ENCODE measurements at regions of chr1 and their contacts with region 1.

Region 1: DNA sequence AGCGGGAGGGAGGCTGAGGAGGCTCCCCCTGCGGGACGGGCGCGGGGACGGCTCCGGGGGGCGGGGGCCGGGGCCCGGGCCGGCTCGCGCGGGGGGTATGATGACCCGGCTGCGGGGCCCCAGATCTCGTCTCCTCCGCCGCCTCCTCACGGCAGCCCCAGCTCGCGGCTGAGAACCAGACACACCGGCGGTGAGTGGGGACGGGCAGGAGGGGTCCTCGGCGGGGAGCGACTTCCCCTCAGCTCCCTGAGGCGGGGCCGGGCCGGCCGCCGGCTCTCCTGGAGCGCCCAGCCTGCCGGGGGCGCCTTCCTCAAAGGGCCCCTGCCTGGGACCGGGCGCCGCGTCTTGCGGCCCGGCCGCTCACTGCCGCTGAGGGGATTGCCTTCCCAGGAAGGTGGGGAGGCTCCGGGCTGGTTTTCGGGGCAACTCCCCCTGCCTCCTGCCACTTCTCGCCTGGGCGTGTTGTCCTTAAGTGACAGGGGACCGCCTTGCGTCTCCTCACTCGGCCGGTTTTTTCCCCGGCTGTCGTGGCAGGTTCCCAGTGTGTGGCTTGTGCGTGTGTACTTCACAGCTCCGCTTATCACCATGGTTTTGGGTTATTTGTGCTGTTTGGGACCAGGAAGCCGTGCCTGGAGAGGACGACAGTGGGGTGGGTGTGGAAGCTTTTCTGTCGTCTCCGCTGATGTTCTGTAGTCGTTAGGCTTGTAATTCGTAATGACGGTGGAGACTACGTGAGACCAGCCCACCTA is 800 bp downstream of the HIPK1 start:
- DNase-seq: peak; percentile 70
- CTCF ChIP-seq: peak; percentile 30

Region 2: DNA sequence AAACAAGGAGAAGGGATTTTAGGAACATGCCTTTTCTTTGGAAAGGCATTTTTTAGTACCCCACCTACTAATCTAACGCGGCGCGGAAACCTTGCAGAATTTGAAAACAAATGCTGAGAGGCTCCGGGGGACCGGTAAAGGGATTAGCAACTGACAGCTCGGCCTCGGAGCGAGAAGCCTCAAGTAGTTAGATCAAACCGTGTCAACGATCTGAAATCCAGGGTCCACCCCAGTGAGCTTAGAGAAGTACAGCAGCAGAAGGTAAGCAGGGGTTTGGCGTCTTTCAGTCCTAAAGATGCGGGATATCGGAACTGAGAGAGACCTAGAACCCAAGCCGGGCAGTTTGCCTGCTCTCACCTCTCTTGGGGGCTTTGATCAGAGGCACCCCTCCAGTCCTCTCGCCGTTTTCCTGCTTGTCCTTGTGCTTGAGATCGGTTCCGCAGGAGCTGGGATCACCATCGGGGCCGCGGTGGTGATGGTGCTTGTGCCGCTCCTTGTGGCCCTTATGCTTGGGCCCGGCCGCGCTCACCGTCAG is 118.5 kb before region 1 on chr1:
- in situ Hi-C with region 1: no loop called
- DNase-seq: peak; percentile 28
- CTCF ChIP-seq: no peak

Region 3: GRCh38 chr1:113821916-113822315 is 108.0 kb before region 1 on chr1:
- in situ Hi-C with region 1: loop called (anchors 10 kb)
- DNase-seq: no peak
- CTCF ChIP-seq: no peak

Region 4: GRCh38 chr1:114152508-114153260 is 222.8 kb after region 1 on chr1:
- in situ Hi-C with region 1: no loop called
- DNase-seq: peak; percentile 50
- CTCF ChIP-seq: no peak

Region 5: DNA sequence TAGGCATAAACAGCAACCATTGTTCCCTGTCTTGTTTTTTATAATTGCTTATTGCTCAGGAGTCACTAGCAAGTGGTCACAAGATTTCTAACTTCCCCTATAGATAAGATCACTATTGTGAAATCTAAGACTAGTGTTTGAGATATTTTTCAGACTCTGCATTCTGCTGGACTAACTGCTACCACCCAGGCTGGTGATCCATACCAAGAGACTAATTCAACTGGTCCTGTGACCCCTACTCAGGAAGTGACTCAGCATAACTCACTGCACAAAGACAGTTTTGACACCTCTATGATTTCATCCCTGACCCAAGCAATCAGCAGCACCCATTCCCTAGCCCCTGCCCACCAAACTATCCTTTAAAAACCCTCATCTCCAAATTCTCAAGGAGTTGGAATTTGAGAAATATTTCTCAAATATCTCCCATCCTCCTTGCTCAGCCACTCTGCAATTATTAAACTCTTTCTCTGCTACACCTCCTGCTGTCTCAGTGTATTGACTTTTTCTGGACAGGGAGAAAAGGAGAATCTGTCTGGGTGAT is 528.4 kb after region 1 on chr1:
- in situ Hi-C with region 1: no loop called
- DNase-seq: no peak
- CTCF ChIP-seq: no peak

Measured in GM13977 (cell line).